IMR-90 (cell line): ENCODE measurements at regions of chr12 and their contacts with region 1.

Region 1: GRCh38 chr12:54479421-54479820 is 6.0 kb upstream of the GTSF1 start:
- DNase-seq: peak; percentile 69
- ATAC-seq: peak; percentile 97
- H3K4me3 ChIP-seq: no peak overlapping the region
- H3K27ac ChIP-seq: no peak overlapping the region
- H3K4me1 ChIP-seq: no peaks in the 10 kb centered on the region
- H3K27me3 ChIP-seq: peaks cover 1% of the 10 kb centered on the region
- CTCF ChIP-seq: no peak
- POLR2A ChIP-seq: no peak
- RAD21 ChIP-seq: no peak

Region 2: DNA sequence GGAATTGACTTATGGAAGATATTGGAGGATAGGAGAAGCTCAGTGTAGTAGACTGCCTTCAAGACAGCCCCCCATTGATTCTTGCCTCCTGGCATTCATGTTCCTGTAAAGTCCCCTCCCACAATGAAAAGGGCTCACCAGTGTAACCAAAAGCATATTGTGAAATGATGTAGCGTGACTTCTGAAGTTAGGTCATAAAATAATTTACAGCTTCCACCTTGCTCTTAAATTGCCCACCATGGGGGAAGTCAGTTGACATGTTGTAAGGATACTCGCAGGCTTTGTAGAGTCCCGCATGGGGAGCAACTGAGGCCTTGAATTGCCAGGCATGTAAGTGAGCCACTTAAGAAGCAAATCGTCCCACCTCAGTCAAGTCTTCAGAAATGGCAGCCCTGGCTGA is 31.1 kb before region 1 on chr12:
- CTCF ChIA-PET with region 1: no interaction called
- POLR2A ChIA-PET with region 1: no interaction called
- dilution Hi-C with region 1: no loop called
- in situ Hi-C with region 1: no loop called
- intact Hi-C with region 1: no loop called
- DNase-seq: no peak
- ATAC-seq: no peak
- H3K4me3 ChIP-seq: no peak overlapping the region
- H3K27ac ChIP-seq: no peak overlapping the region
- H3K4me1 ChIP-seq: no peaks in the 10 kb centered on the region
- H3K27me3 ChIP-seq: peaks cover 40% of the 10 kb centered on the region
- CTCF ChIP-seq: no peak
- POLR2A ChIP-seq: no peak
- RAD21 ChIP-seq: no peak

Region 3: DNA sequence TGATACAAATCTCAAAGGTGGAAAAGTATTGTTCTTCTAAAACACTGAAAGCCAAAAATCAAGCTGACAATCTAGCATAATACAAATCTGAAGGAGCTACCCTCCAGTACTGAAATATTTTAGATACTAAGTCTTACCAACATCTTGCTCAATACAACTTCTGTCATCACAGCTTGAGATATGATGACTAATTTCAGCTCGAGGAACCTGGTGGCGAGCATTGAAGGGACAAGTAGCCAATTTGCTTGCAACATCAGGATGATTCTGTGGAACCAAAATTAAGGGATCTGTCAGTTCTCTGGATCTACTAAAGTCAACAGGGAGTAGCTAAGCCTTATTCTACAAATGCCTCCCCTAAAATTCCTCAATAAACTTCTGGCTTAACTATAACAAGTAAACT is 16.4 kb before region 1 on chr12:
- CTCF ChIA-PET with region 1: interaction called, 14 read pairs
- POLR2A ChIA-PET with region 1: no interaction called
- dilution Hi-C with region 1: no loop called
- in situ Hi-C with region 1: no loop called
- intact Hi-C with region 1: no loop called
- DNase-seq: peak; percentile 27
- ATAC-seq: no peak
- H3K4me3 ChIP-seq: no peak overlapping the region
- H3K27ac ChIP-seq: no peak overlapping the region
- H3K4me1 ChIP-seq: no peaks in the 10 kb centered on the region
- H3K27me3 ChIP-seq: peaks cover 33% of the 10 kb centered on the region
- CTCF ChIP-seq: no peak
- POLR2A ChIP-seq: no peak
- RAD21 ChIP-seq: no peak